Gastrocnemius medialis (tissue), 4 donors: ENCODE measurements at regions of chr2 and their contacts with region 1.

Region 1: DNA sequence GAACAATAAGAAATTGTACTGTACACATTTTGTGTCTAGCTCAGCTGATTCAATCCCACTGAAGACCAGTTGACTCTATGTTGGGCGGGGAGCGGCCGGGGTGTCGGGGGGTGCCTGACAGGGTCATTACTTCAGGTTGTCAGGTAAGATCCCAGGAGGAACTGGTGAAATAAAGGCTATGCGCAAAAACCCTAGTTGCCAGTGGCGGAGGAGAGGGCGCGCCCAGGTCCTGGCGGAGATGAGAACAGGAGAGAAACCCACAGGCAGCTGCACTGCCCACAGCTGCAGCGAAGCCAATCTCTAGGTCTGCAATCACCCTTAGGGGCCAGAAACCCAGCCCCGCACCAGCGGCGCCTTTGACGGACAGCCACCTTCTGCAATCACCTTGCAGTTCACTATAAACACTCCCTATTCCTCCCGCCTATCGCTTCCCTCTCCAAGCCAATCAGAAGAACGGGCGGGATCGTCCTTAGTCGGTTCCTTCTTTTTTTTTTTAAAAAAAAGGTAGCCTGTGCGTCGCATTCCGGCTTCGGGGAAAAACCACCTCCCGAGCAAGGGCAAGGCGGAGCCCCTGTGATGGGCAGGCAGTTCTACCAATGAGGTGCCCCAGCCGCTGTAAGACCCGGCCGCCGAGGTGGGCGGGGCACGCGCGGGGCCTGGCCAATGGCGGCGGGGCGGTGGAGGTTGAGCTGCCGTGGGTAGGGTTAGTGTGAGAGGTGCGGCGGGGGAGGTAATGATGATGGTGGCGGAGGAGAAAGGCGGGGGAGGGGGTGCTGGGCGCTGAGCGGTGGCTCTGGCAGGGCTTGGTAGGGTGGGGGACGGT is at the start of gene EHBP1:
- DNase-seq: peak; percentile 98 to 99
- ATAC-seq: peak; percentile 96 to 97
- H3K4me3 ChIP-seq: peak within 1 kb of the TSS; percentile 82 to 100 (median 91)
- H3K27ac ChIP-seq: peak within 1 kb of the TSS; percentile 84 to 98 (median 94)
- H3K4me1 ChIP-seq: peaks cover 28 to 31% of the 10 kb centered on the region in 2 donors
- H3K27me3 ChIP-seq: no peaks in the 10 kb centered on the region
- CTCF ChIP-seq: no peak
- POLR2A ChIP-seq: peak; percentile 53 to 77
- total RNA-seq, gene EHBP1: 11.1 to 19.0 (median 15.4) TPM

Region 2: GRCh38 chr2:62456721-62457539 is 248.3 kb before region 1 on chr2:
- in situ Hi-C with region 1: no loop called
- intact Hi-C with region 1: loop called (anchors 10 kb)
- DNase-seq: peak; percentile 12 to 25
- ATAC-seq: peak; percentile 73 to 84
- H3K4me3 ChIP-seq: peak overlapping the region; percentile 63 to 99 (median 75)
- H3K27ac ChIP-seq: peak overlapping the region; percentile 50 to 73 (median 58)
- H3K4me1 ChIP-seq: peaks cover 3 to 7% of the 10 kb centered on the region in 2 donors
- H3K27me3 ChIP-seq: no peaks in the 10 kb centered on the region
- CTCF ChIP-seq: peak; percentile 89 to 99 (median 97)
- POLR2A ChIP-seq: no peak

Region 3: GRCh38 chr2:62505750-62506420 is 199.3 kb before region 1 on chr2 and contains the start of gene TMEM17:
- in situ Hi-C with region 1: no loop called
- intact Hi-C with region 1: loop called (anchors 1 kb)
- DNase-seq: peak; percentile 84 to 85
- ATAC-seq: peak; percentile 96 to 97
- H3K4me3 ChIP-seq: peak within 1 kb of the TSS; percentile 66 to 79 (median 70)
- H3K27ac ChIP-seq: peak within 1 kb of the TSS; percentile 79 to 85 (median 84)
- H3K4me1 ChIP-seq: peaks cover 8 to 9% of the 10 kb centered on the region in 2 donors
- H3K27me3 ChIP-seq: no peaks in the 10 kb centered on the region
- CTCF ChIP-seq: no peak
- POLR2A ChIP-seq: peak in 1 of 2 donors; percentile 49
- total RNA-seq, gene TMEM17: 0.15 to 1.8 (median 0.51) TPM

Region 4: GRCh38 chr2:62774555-62775366 is 69.5 kb after region 1 on chr2:
- in situ Hi-C with region 1: no loop called
- intact Hi-C with region 1: loop called (anchors 5 kb)
- DNase-seq: no peak
- ATAC-seq: peak; percentile 63 to 76
- H3K4me3 ChIP-seq: no peak overlapping the region
- H3K27ac ChIP-seq: no peak overlapping the region
- H3K4me1 ChIP-seq: no peaks in the 10 kb centered on the region
- H3K27me3 ChIP-seq: no peaks in the 10 kb centered on the region
- CTCF ChIP-seq: peak; percentile 58 to 90 (median 80)
- POLR2A ChIP-seq: no peak